MCF 10A (cell line): ENCODE measurements at regions of chr10 and their contacts with region 1.

Region 1: DNA sequence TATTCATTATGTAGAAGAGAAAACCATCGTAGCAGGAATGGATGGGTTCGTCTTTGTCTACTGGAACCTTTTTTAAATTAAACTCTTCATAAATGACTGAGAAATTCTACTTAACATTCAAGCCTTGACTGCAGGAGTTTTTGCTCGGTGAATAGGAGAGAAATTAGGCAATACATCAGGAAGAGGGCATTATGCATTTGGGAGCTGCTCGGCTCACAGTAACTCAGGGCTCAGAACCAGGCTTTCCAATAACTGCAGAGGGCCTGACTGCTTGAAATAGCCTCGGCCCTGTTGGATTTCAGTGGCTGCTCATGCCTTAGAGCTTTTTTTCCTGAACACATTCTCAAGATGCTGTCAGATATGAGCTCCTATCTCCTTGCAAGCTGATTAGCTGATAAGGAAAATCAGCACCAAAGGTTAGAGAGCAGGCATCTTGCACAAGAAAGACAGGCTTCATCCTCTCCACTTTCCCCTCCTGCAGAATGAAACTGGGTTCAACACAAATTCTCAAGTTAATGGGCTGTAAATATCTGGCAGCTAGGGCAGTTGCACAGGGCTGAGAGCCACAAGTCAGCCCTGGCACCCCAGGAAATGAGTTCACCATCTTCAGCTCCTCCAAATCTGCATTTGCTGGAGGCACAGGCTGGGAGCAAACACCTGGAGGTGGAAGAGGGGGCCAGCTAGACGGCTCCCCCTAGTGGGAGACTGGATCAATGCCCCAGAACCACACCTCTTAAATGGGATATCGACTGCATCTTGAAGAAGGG is 24.3 kb downstream of the TECTB start:
- DNase-seq: peak; percentile 74
- H3K4me3 Mint-ChIP-seq: no peak overlapping the region
- H3K27ac Mint-ChIP-seq: no peak overlapping the region
- H3K4me1 Mint-ChIP-seq: peaks cover 14% of the 10 kb centered on the region
- H3K27me3 Mint-ChIP-seq: no peaks in the 10 kb centered on the region
- CTCF ChIP-seq: peak; percentile 73

Region 2: DNA sequence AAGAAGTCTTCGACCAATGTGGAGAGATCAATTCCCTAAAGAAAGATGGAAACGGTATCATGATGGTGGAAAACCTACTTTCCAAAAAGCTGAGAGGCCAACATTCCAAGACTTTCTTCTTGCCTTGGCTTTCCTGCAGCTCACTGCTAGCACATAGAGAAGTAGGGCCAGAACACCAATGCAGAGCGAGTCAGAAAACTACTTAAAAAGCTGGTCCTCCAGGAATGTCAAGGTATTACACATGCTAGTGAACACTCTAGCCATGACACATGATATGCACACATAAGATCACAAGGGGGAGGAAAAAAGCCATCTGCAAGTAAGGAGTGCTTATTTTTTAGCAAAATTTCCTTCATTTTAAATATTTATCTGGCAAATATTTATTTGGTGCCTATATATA is 146.7 kb before region 1 on chr10:
- CTCF ChIA-PET with region 1: interaction called, 11 read pairs
- POLR2A ChIA-PET with region 1: no interaction called
- intact Hi-C with region 1: no loop called
- DNase-seq: no peak
- H3K4me3 Mint-ChIP-seq: no peak overlapping the region
- H3K27ac Mint-ChIP-seq: no peak overlapping the region
- H3K4me1 Mint-ChIP-seq: no peaks in the 10 kb centered on the region
- H3K27me3 Mint-ChIP-seq: no peaks in the 10 kb centered on the region
- CTCF ChIP-seq: no peak

Region 3: DNA sequence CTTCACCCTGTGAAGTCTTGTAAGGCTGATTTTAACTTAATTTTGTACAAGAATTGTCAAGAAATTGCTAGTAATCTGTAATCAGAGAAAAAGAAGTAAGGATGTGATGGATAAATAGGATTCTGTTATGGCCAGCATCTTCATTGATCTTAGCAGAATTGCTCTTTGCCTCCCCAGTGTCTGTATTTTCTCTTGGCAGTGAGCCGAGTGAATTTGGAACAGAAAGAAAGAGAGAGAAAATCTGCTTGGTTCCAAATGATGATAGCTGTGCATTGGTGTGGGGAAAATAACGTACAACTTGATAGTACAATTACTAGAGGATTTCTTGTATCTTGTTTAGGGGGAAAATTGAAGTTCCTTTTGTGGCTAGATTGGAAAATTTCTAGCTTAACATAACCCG is 174.1 kb after region 1 on chr10:
- CTCF ChIA-PET with region 1: no interaction called
- POLR2A ChIA-PET with region 1: no interaction called
- intact Hi-C with region 1: no loop called
- DNase-seq: no peak
- H3K4me3 Mint-ChIP-seq: no peak overlapping the region
- H3K27ac Mint-ChIP-seq: no peak overlapping the region
- H3K4me1 Mint-ChIP-seq: peaks cover 6% of the 10 kb centered on the region
- H3K27me3 Mint-ChIP-seq: no peaks in the 10 kb centered on the region
- CTCF ChIP-seq: no peak